IMR-90 (cell line): ENCODE measurements at regions of chr2 and their contacts with region 1.

Region 1: DNA sequence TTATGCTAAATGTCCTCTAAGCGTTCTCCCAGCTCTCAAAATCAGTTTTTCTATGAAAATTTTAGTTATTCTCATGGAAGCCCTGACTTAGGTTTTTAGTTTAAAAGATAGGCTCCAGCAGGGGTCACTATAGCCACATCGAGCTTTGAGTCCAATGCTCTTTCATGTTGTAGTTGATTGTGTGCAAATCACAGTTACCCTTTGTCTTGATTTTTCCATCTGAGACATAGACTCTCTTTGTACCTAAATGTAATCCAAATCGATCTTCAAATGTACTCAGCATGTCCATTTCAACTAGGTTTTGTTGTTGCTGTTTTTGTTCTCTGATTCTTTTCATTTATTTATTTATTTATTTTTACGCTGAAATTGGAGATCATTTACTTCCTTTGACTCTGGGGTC is 26.4 kb upstream of the MSTN start:
- DNase-seq: peak; percentile 71
- ATAC-seq: peak; percentile 71
- H3K4me3 ChIP-seq: no peak overlapping the region
- H3K27ac ChIP-seq: no peak overlapping the region
- H3K4me1 ChIP-seq: no peaks in the 10 kb centered on the region; the same call in 1 of the 2 replicates
- H3K27me3 ChIP-seq: peaks cover 2% of the 10 kb centered on the region; the same call in 1 of the 2 replicates
- CTCF ChIP-seq: peak; percentile 86
- POLR2A ChIP-seq: no peak
- RAD21 ChIP-seq: peak; percentile 89

Region 2: DNA sequence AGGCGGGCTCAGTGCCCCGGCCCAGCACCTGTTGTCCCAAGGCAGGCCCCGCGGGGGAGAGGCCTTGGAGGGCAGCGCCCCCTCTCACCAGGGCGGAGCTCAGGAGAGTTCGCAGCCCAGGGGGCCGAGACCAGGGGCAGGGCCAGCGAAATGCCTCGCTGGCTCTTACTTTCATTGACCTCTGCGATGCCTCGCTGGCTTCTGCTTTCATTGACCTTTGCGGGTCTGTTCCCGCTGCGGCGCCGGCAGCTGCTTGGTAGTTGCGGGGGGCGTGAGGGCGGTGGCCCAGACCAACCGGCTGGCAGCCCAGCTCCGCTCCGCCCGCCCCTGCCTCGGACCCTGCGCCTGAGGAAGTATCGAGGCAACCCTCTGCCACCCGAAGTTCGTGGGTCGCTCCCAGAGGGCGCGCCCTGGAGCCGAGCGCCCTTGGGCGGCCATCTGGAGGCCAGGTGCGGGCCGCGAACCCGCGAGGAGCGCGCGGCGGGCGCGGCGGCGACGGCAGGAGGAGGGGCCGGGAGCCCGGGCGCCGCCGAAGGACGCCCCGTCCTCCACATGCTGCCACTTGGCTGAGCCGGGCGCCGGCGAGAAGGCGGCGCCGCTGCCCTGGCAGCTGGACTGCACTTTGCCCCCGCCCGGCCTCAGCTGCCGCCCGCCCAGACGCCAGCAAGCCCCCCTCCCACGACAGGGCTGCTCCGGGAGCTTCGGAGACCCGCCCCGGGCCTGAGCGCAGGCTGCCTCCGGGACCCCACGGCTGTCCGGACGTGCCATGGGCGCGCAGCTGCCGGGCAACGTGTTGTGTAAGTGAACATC is 91.6 kb after region 1 on chr2:
- CTCF ChIA-PET with region 1: no interaction called
- POLR2A ChIA-PET with region 1: no interaction called
- dilution Hi-C with region 1: no loop called
- in situ Hi-C with region 1: no loop called
- intact Hi-C with region 1: loop called (anchors 2 kb)
- DNase-seq: peak; percentile 2
- ATAC-seq: peak; percentile 85
- H3K4me3 ChIP-seq: peak overlapping the region; percentile 54
- H3K27ac ChIP-seq: no peak overlapping the region; the same call in 1 of the 2 replicates
- H3K4me1 ChIP-seq: no peaks in the 10 kb centered on the region
- H3K27me3 ChIP-seq: no peaks in the 10 kb centered on the region; the same call in 1 of the 2 replicates
- CTCF ChIP-seq: 0 out of 2 replicates have a peak, but pooled peaks have one; percentile 9
- POLR2A ChIP-seq: no peak
- RAD21 ChIP-seq: no peak

Region 3: DNA sequence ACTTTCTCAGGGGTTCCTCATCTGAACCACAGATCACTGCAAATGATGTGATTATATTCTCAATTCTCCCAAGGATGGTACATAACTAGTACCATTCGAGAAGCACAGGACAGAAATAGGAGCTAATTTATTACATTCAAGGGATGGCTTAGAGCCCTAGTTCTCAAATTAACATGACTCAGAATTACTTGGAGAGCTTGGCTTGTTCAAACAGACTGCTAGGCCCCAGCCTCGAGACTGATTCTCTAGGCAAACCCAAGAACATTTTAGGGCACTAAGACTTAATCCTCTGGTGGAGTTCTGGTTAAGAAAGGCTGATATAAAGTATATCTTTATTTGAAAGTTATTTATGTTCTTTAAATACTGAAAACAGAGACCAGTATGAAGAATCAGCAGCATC is 194.9 kb after region 1 on chr2:
- CTCF ChIA-PET with region 1: no interaction called
- POLR2A ChIA-PET with region 1: no interaction called
- dilution Hi-C with region 1: no loop called
- in situ Hi-C with region 1: loop called (anchors 10 kb)
- intact Hi-C with region 1: no loop called
- DNase-seq: peak; percentile 69
- ATAC-seq: peak; percentile 88
- H3K4me3 ChIP-seq: no peak overlapping the region
- H3K27ac ChIP-seq: no peak overlapping the region
- H3K4me1 ChIP-seq: no peaks in the 10 kb centered on the region
- H3K27me3 ChIP-seq: no peaks in the 10 kb centered on the region
- CTCF ChIP-seq: no peak
- POLR2A ChIP-seq: no peak
- RAD21 ChIP-seq: no peak

Region 4: GRCh38 chr2:190379249-190379964 is 290.5 kb after region 1 on chr2:
- CTCF ChIA-PET with region 1: no interaction called
- POLR2A ChIA-PET with region 1: no interaction called
- dilution Hi-C with region 1: no loop called
- in situ Hi-C with region 1: loop called (anchors 10 kb)
- intact Hi-C with region 1: no loop called
- DNase-seq: peak; percentile 57
- ATAC-seq: peak; percentile 64
- H3K4me3 ChIP-seq: no peak overlapping the region
- H3K27ac ChIP-seq: no peak overlapping the region
- H3K4me1 ChIP-seq: no peaks in the 10 kb centered on the region
- H3K27me3 ChIP-seq: no peaks in the 10 kb centered on the region
- CTCF ChIP-seq: no peak
- POLR2A ChIP-seq: no peak
- RAD21 ChIP-seq: no peak

Region 5: GRCh38 chr2:190804182-190804795 is 715.4 kb after region 1 on chr2:
- CTCF ChIA-PET with region 1: no interaction called
- POLR2A ChIA-PET with region 1: no interaction called
- dilution Hi-C with region 1: no loop called
- in situ Hi-C with region 1: loop called (anchors 10 kb)
- intact Hi-C with region 1: loop called (anchors 2 kb)
- DNase-seq: peak; percentile 49
- ATAC-seq: peak; percentile 76
- H3K4me3 ChIP-seq: no peak overlapping the region
- H3K27ac ChIP-seq: no peak overlapping the region
- H3K4me1 ChIP-seq: no peaks in the 10 kb centered on the region; the same call in 1 of the 2 replicates
- H3K27me3 ChIP-seq: no peaks in the 10 kb centered on the region
- CTCF ChIP-seq: peak; percentile 75
- POLR2A ChIP-seq: no peak
- RAD21 ChIP-seq: peak; percentile 78